PC-9 (cell line): ENCODE measurements at regions of chr7 and their contacts with region 1.

Region 1: DNA sequence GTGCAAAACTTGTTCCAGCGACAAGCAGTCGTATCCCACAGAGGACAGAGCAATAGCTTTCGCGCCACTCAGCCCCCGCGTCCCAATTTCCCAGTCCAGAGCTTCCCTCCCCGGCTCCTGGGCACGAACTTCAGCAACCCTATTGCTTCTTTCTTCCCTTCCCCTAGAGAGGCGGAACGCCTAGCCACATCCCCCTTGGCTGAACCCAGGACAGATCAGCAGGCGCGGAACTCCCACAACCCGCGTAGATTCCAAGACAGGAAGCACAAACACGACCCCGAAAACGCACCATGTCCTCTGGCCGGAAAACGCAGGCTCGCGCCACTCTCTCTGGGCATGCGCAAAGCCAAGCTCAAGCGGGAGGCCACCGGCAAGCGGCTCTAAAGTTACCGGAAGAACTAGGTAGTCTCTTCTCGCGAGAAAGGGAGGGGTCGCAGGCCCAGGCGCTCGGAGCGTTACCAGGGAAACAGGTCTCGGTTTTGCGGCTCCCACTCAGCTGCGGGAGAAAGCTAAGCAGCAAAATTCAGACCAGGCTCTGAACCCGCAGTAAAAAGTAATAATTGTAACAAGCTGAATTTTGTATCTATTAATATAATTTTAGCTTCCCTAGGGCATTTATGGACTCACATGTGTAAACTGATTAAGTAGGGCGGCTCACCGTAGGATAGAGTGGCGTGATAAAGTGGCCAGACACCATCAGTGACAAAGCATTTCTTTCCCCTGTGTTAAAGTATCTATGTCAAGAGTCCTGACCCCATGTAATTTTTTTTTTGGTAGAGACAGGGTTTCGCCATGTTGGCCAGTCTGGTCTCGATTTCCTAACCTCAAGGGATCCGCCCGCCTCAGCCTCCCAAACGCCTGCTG is at the start of gene TMEM209:
- DNase-seq: peak; percentile 95 to 98
- H3K4me3 ChIP-seq: peak within 1 kb of the TSS; percentile 63
- H3K27ac ChIP-seq: peak within 1 kb of the TSS; percentile 84
- H3K4me1 ChIP-seq: peaks cover 23% of the 10 kb centered on the region
- H3K27me3 ChIP-seq: no peaks in the 10 kb centered on the region
- CTCF ChIP-seq: no peak
- total RNA-seq, gene TMEM209: 20.0 and 30.8 TPM in 2 replicates

Region 2: GRCh38 chr7:130292682-130293257 is 87.5 kb after region 1 on chr7 and contains the start of gene CPA4:
- CTCF ChIA-PET with region 1: no interaction called
- POLR2A ChIA-PET with region 1: interaction called, 17 read pairs
- intact Hi-C with region 1: no loop called
- DNase-seq: peak; percentile 64 to 98
- H3K4me3 ChIP-seq: peak within 1 kb of the TSS; percentile 25; the same call in 1 of the 2 replicates
- H3K27ac ChIP-seq: peak within 1 kb of the TSS; percentile 42
- H3K4me1 ChIP-seq: peaks cover 52% of the 10 kb centered on the region
- H3K27me3 ChIP-seq: no peaks in the 10 kb centered on the region
- CTCF ChIP-seq: no peak
- total RNA-seq, gene CPA4: 4.2 and 9.8 TPM in 2 replicates

Region 3: DNA sequence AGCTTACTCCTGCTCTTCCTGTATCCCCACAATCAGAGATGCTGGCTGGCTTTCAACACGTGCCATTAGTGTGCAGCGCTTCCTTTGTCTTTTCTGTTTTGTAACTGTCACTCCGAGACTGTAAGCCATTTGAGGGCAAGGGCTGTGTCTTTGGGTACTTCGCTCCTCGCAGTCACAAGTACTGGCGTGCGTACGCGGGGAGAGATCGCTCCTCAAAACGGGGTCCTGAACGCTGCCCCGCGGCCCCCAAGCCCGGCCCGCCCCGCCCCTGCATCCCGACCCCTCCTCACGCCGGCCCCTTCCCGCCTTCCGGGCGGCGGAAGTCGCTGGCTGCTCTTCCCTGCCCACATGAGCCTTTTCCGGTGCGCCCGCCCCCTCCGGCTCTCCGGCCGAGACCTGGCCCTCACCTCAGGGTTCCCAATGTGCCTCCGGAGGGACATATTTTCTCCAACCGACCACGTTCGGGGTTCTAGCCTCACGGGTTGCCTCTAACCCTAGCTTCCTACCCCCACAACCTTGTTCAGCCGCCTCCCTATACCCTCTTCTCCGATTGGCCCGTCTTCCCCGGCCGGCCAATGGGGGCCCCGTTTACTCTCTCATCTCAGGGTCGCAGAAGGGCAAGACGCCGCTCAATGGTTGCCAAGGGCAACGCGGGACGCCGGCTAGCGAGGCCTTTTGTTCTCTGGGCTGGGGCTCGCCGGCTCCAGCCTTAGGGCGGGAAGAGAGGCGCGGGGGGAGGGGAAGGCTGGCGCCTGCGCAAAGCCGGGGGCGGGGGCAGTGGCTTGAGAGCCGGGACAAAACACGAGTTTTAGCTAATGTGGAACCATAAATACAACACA is 235.4 kb after region 1 on chr7 and contains the start of gene CEP41:
- CTCF ChIA-PET with region 1: no interaction called
- POLR2A ChIA-PET with region 1: interaction called, 3 read pairs
- intact Hi-C with region 1: loop called (anchors 1 kb)
- DNase-seq: peak; percentile 93 to 99
- H3K4me3 ChIP-seq: peak within 1 kb of the TSS; percentile 73
- H3K27ac ChIP-seq: peak within 1 kb of the TSS; percentile 65
- H3K4me1 ChIP-seq: peaks cover 15% of the 10 kb centered on the region
- H3K27me3 ChIP-seq: no peaks in the 10 kb centered on the region
- CTCF ChIP-seq: no peak
- total RNA-seq, gene CEP41: 16.3 and 18.0 TPM in 2 replicates

Region 4: GRCh38 chr7:130615583-130615982 is 410.3 kb after region 1 on chr7:
- CTCF ChIA-PET with region 1: no interaction called
- POLR2A ChIA-PET with region 1: interaction called, 16 read pairs
- intact Hi-C with region 1: no loop called
- DNase-seq: no peak
- H3K4me3 ChIP-seq: no peak overlapping the region
- H3K27ac ChIP-seq: no peak overlapping the region
- H3K4me1 ChIP-seq: no peaks in the 10 kb centered on the region
- H3K27me3 ChIP-seq: no peaks in the 10 kb centered on the region
- CTCF ChIP-seq: no peak